MCF 10A (cell line): ENCODE measurements at regions of chr15 and their contacts with region 1.

Region 1: DNA sequence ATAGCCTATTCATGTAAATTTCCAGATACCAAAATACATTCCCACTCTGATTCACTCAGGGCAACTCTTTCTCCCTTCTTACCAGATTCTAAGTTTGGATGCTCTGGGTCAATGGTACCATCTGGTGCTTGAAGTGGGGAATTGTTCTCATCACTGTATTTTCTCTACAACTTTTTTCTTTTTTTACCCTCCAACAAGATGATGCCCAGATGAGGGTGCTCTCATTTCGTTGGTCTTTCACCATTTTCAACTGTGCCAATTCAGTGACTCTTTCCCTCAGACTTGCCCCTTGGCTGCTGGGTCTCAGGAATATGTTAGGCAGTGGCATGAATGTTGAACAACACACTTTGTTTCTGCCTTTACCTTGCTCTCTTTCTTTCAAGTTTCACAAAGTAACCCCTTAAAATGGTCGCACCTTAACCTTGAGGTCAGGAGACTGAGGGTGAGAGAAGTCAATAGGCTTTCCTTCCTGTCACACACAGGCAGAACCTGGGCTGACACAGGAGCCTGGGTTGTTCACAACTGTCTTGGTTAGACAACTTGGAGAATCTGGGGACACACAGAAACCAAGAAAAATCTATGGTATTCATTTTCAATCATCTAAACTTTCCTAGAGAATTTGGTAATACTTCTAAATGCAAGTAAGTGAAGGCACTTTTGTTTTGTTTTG is 330.7 kb upstream of the SLCO3A1 start:
- DNase-seq: peak; percentile 56
- H3K4me3 Mint-ChIP-seq: no peak overlapping the region
- H3K27ac Mint-ChIP-seq: no peak overlapping the region
- H3K4me1 Mint-ChIP-seq: peaks cover 13% of the 10 kb centered on the region
- H3K27me3 Mint-ChIP-seq: no peaks in the 10 kb centered on the region
- CTCF ChIP-seq: peak; percentile 43

Region 2: DNA sequence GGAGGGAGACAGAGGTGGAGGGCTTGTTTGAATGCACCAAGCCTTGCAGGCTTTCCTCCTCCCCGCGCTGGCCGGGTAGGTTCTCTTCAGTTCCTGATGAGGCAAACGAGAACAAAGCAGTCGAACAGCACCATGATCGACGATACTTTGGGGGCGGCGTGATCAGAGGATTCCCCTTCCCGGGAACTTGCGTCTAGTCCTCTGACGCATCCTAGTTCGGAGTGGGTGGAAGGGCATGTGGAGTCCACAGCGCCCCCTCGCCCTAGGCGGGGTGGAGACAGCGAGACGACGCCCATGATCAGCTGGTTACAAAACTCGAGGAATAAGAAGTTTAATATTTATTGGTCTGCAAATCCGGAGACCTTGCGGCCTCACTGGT is 423.2 kb before region 1 on chr15:
- CTCF ChIA-PET with region 1: no interaction called
- POLR2A ChIA-PET with region 1: no interaction called
- intact Hi-C with region 1: no loop called
- DNase-seq: peak; percentile 26
- H3K4me3 Mint-ChIP-seq: peak overlapping the region; percentile 72
- H3K27ac Mint-ChIP-seq: no peak overlapping the region
- H3K4me1 Mint-ChIP-seq: peaks cover 10% of the 10 kb centered on the region
- H3K27me3 Mint-ChIP-seq: peaks cover 89% of the 10 kb centered on the region
- CTCF ChIP-seq: no peak

Region 3: DNA sequence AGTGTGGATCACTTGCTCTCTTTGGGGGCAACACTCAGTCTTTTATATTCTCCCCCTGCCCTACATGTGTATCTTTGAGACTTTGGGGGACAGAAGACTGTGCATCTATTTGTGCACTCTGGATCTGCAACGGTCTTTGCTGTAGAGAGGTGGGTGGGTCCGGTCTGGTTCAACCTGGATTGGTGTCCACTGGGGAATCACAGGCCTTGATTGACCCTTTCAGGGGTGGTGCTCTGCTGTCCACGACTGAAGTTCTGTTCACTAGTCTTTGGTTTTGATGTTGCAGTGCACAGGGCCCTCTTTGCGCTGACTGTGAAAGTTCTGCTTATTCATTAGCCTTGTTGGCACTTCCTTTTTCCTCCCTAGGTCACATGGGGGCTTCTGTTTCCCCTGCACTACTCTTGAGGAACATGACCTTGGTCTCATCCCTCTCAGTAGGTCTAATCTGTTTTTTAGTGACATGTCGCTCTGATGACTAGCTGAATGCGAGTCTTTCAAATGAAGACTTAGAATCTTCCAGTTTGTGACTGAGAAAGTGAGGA is 138.5 kb before region 1 on chr15:
- CTCF ChIA-PET with region 1: no interaction called
- POLR2A ChIA-PET with region 1: interaction called, 3 read pairs
- intact Hi-C with region 1: loop called (anchors 5 kb)
- DNase-seq: no peak
- H3K4me3 Mint-ChIP-seq: no peak overlapping the region
- H3K27ac Mint-ChIP-seq: no peak overlapping the region
- H3K4me1 Mint-ChIP-seq: no peaks in the 10 kb centered on the region
- H3K27me3 Mint-ChIP-seq: peaks cover 7% of the 10 kb centered on the region
- CTCF ChIP-seq: no peak

Region 4: DNA sequence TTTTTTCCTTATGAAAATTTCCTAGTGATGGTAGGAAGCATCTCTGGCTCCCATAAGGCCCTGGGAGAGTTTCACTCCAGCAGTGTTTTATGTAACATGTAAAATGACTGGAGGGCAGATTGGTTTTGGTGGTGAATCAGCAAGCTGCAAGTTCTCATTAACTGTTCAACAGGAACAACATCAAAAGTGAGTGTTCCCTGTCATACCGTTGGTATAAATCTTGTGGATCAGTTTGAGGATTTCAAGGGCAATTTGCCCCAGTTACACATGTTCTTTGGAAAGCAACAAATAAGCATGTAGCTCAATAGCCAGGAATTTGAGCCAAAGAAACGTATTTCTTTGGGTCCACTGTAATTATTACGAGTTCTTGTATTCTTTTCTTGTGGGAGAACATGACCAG is 77.0 kb before region 1 on chr15:
- CTCF ChIA-PET with region 1: no interaction called
- POLR2A ChIA-PET with region 1: no interaction called
- intact Hi-C with region 1: no loop called
- DNase-seq: peak; percentile 61
- H3K4me3 Mint-ChIP-seq: no peak overlapping the region
- H3K27ac Mint-ChIP-seq: no peak overlapping the region
- H3K4me1 Mint-ChIP-seq: no peaks in the 10 kb centered on the region
- H3K27me3 Mint-ChIP-seq: no peaks in the 10 kb centered on the region
- CTCF ChIP-seq: no peak